ENCODE measurements at regions of chr13 and their contacts with region 1.

Region 1: DNA sequence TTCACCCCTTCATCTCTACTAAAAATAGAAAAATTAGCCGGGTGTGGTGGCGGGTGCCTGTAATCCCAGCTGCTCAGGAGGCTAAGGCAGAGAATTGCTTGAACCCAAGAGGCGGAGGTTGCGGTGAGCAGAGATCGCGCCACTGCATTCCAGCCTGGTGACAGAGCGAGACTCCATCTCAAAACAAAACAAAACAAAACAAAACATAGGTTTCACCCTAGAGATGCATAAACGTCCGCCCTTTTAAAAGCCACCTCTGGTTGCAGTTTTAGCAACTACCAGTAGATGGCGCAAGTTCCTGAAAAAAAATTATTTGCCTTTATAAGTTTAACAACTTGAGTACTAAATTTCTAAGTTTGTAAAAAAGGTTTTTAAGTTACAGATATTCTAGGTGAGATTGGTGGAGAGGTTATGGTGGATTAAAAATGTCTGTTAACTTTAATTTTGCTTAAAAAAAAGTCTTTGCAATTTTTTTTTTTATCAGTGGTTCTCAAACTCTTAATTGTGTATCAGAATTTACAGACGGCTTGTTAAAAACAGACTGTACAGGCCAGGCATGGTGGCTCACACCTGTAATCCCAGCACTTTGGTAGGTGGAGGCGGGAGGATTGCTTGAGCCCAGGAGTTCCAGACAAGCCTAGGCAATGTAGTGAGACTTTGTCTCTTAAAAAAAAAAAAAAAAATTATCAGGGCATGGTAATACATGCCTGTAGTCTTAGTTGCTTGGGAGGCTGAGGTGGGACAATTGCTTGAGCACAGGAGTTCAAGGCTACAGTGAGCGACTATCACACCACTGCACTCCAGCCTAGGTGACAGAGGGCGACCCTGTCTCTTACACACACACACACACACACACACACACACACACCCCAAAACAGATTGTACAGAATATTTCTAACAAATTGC is 42.1 kb downstream of the NAA16 start:
- DNase-seq: peak; percentile 35
- ATAC-seq: peak; percentile 65
- H3K4me3 ChIP-seq: no peak overlapping the region
- H3K27ac ChIP-seq: no peak overlapping the region
- H3K4me1 ChIP-seq: peaks cover 20% of the 10 kb centered on the region
- H3K27me3 ChIP-seq: no peaks in the 10 kb centered on the region
- CTCF ChIP-seq: peak; percentile 56
- EP300 ChIP-seq: no peak
- POLR2A ChIP-seq: no peak
- RAD21 ChIP-seq: no peak

Region 2: DNA sequence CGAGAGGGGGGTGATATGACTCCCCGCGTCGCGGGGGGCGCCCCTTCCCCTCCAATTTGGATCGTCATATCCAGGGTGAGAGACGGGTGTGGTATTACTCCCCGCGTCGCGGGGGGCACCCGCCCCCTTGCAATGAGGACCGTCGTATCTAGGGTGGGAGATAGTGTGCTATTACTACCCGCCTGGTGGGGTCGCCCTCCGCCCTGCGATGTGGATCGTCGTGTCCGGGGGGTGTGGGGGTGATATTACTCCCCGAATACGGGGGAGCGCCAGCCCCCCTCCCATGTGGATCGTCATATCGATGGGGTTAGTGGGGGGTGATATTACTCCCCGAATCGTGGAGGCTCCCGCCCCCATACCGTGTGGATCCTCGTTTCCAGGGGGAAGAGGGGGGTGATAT is 75.0 kb after region 1 on chr13:
- CTCF ChIA-PET with region 1: no interaction called
- POLR2A ChIA-PET with region 1: no interaction called
- in situ Hi-C with region 1: no loop called
- intact Hi-C with region 1: no loop called
- DNase-seq: no peak
- ATAC-seq: no peak; the same call in 2 of the 3 replicates
- H3K4me3 ChIP-seq: no peak overlapping the region
- H3K27ac ChIP-seq: no peak overlapping the region
- H3K4me1 ChIP-seq: no peaks in the 10 kb centered on the region
- H3K27me3 ChIP-seq: no peaks in the 10 kb centered on the region
- CTCF ChIP-seq: no peak
- EP300 ChIP-seq: no peak
- POLR2A ChIP-seq: no peak
- RAD21 ChIP-seq: no peak

Region 3: GRCh38 chr13:41763782-41764181 is 410.6 kb after region 1 on chr13:
- CTCF ChIA-PET with region 1: no interaction called
- POLR2A ChIA-PET with region 1: no interaction called
- in situ Hi-C with region 1: no loop called
- intact Hi-C with region 1: loop called (anchors 5 kb)
- DNase-seq: no peak
- ATAC-seq: no peak
- H3K4me3 ChIP-seq: no peak overlapping the region
- H3K27ac ChIP-seq: no peak overlapping the region
- H3K4me1 ChIP-seq: no peaks in the 10 kb centered on the region
- H3K27me3 ChIP-seq: no peaks in the 10 kb centered on the region
- CTCF ChIP-seq: no peak
- EP300 ChIP-seq: no peak
- POLR2A ChIP-seq: no peak
- RAD21 ChIP-seq: no peak